ENCODE measurements at regions of chr10 and their contacts with region 1.

Region 1: GRCh38 chr10:14878266-14879054 is at the start of gene SUV39H2:
- DNase-seq: peak; percentile 99
- H3K4me3 Mint-ChIP-seq: peak within 1 kb of the TSS; percentile 96
- H3K27ac Mint-ChIP-seq: peak within 1 kb of the TSS; percentile 92
- H3K4me1 Mint-ChIP-seq: peaks cover 30% of the 10 kb centered on the region
- H3K27me3 Mint-ChIP-seq: no peaks in the 10 kb centered on the region
- total RNA-seq, gene SUV39H2: 46.7 and 47.5 TPM in 2 replicates

Region 2: DNA sequence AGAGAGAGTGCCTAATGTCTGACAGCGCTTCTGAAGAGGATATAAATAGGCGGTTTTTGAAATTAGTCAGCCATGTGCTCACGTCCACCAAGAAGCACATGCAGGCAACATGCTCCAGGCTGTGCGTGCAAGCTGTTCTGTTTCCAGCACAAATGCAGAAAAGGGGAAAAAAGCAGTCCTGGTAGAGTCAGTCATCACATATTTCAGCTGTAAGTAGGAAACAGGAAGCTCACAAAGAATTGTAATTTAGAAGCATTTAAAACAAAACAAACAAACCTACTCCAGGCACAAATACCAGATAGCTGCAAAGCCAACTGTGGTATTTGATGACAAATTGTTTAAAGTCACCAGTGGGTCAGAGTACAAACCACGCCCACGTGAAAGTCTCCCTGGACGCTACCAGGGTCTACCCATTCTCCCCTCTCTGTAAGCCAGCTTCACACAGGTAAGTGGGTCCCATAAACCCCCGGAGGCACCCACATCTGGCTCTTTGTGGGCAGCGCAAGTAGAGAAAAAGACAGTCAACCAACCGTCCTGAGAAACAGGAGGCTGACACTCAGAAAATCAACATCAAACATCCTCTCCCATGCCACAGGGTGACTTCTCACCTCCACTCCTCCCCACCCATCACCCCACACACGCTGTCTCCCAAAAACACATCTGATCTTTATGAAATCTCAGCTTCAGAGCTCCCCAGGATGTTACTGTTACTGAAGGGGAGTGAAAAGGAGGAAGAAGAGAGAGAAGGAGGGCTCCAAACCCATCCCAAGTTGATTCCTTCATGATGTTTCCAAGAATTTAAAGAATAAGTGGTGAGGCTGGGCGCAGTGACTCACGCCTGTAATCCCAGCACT is 290.1 kb before region 1 on chr10:
- intact Hi-C with region 1: loop called (anchors 1 kb)
- DNase-seq: peak; percentile 87
- H3K4me3 Mint-ChIP-seq: peak overlapping the region; percentile 84
- H3K27ac Mint-ChIP-seq: peak overlapping the region; percentile 97
- H3K4me1 Mint-ChIP-seq: peaks cover 75% of the 10 kb centered on the region
- H3K27me3 Mint-ChIP-seq: no peaks in the 10 kb centered on the region

Region 3: GRCh38 chr10:14837757-14838581 is 40.5 kb before region 1 on chr10 and contains the starts of genes CDNF, HSPA14 and MSANTD7:
- intact Hi-C with region 1: loop called (anchors 1 kb)
- DNase-seq: peak; percentile 100
- H3K4me3 Mint-ChIP-seq: peak within 1 kb of the TSS; percentile 92
- H3K27ac Mint-ChIP-seq: peak within 1 kb of the TSS; percentile 96
- H3K4me1 Mint-ChIP-seq: peaks cover 18% of the 10 kb centered on the region
- H3K27me3 Mint-ChIP-seq: no peaks in the 10 kb centered on the region
- total RNA-seq, gene CDNF: 0.62 and 0.70 TPM in 2 replicates
- total RNA-seq, gene HSPA14: 42.0 and 44.1 TPM in 2 replicates
- total RNA-seq, gene MSANTD7: 28.9 and 30.3 TPM in 2 replicates

Region 4: GRCh38 chr10:14959276-14960057 is 81.0 kb after region 1 on chr10 and contains the start of gene MEIG1:
- intact Hi-C with region 1: loop called (anchors 1 kb)
- DNase-seq: peak; percentile 98
- H3K4me3 Mint-ChIP-seq: peak within 1 kb of the TSS; percentile 93
- H3K27ac Mint-ChIP-seq: peak within 1 kb of the TSS; percentile 96
- H3K4me1 Mint-ChIP-seq: peaks cover 17% of the 10 kb centered on the region
- H3K27me3 Mint-ChIP-seq: no peaks in the 10 kb centered on the region
- total RNA-seq, gene MEIG1: not detected in 2 replicates

Region 5: DNA sequence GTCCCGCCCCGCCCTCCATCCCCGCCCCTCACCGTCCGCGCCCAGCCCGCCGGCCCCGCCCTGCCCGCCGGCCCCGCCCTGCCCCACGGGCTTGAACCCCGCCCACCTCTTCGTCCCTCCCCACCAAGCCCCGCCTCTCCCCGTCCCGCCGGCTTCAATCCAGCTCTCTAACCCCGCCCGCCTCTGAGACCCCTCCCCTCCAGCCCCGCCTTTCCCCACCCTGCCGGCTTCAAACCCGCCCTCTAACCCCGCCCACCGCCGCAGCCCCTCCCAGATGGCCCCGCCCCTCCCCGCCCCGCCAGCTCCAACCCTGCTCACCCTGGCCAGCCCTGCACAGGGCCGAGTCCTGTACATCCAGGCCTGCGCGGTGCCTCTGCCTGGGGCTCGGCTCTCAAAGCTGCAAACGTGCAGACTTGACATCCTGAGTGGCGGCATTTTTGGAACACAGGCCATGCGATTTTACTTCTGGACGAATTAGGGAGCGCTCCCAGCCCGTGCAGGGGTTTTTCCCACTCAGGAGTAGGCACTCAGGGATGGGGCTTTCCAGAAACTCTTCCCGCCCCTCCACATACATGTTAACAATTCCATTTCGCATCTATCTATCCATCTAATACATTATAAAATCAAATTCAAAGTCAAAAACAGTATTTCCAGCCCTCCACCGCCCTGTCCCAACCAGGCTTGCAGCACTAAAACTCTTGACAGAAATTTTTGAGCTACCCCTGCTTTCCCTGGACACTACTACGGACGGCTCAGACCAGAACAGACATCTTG is 290.5 kb after region 1 on chr10:
- intact Hi-C with region 1: loop called (anchors 2 kb)
- DNase-seq: peak; percentile 95
- H3K4me3 Mint-ChIP-seq: peak overlapping the region; percentile 81
- H3K27ac Mint-ChIP-seq: peak overlapping the region; percentile 90
- H3K4me1 Mint-ChIP-seq: peaks cover 46% of the 10 kb centered on the region
- H3K27me3 Mint-ChIP-seq: no peaks in the 10 kb centered on the region

Measured in activated CD4-positive, alpha-beta T cell treated with anti-CD3 and anti-CD28 coated beads, Interleukin-2, amount 10 ng/mL, durations not matched to agents 24 days and 14 days (primary cell).